ENCODE measurements at regions of chr3 and their contacts with region 1.

Region 1: DNA sequence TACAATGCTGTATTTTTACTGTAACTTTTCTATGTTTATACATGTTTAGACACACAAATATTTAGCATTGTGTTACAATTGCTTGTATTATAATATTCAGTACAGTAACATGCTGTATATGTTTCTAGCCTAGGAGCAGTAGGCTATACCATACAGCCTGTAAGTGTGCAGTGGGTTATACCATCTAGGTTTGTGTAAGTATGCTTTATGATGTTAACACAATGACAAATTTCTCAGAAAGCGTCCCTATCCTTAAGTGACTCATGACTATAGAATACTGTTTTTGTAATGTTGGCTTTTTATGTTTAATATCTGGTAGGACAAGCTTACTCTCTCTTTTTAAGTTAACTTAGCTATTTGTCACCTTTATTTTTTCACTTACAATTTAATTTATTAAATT is 127.5 kb upstream of the THRB start:
- DNase-seq: no peak

Region 2: GRCh38 chr3:24332092-24332491 is 290.0 kb before region 1 on chr3:
- intact Hi-C with region 1: loop called in 1 of 2 experiments (anchors 5 kb)
- DNase-seq: no peak

Region 3: GRCh38 chr3:24781454-24781853 is 159.3 kb after region 1 on chr3:
- intact Hi-C with region 1: no loop called
- DNase-seq: no peak